ENCODE measurements at regions of chr4 and their contacts with region 1.

Region 1: GRCh38 chr4:89906777-89907521 is 12.3 kb downstream of the MMRN1 start:
- DNase-seq: no peak
- ATAC-seq: no peak

Region 2: GRCh38 chr4:89226665-89227574 is 680.0 kb before region 1 on chr4:
- intact Hi-C with region 1: loop called in 1 of 2 experiments (anchors 5 kb)
- DNase-seq: peak; percentile 86 to 90
- ATAC-seq: peak; percentile 96

Region 3: DNA sequence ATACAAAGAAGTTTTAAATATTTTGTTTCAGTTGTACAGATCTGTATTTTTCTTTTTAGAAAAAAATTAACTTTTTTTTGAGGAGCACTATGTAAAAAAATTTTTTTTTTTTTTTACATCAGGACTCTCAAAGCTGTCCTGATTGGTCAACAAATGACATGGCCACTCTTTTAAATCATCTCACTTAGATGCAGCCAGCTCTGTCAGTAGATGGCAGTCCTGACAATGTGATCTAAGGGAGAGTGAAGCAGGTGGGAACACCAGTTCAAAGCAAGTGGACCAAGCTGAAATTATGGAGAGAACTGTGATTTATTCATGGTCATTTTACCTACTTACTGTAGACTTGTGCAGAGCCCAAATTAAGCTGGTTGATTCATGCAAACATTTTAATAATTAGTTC is 424.7 kb before region 1 on chr4:
- intact Hi-C with region 1: loop called in 1 of 2 experiments (anchors 10 kb)
- DNase-seq: no peak
- ATAC-seq: peak; percentile 78

Region 4: GRCh38 chr4:89625599-89626298 is 281.2 kb before region 1 on chr4:
- intact Hi-C with region 1: no loop called
- DNase-seq: no peak
- ATAC-seq: no peak

Region 5: DNA sequence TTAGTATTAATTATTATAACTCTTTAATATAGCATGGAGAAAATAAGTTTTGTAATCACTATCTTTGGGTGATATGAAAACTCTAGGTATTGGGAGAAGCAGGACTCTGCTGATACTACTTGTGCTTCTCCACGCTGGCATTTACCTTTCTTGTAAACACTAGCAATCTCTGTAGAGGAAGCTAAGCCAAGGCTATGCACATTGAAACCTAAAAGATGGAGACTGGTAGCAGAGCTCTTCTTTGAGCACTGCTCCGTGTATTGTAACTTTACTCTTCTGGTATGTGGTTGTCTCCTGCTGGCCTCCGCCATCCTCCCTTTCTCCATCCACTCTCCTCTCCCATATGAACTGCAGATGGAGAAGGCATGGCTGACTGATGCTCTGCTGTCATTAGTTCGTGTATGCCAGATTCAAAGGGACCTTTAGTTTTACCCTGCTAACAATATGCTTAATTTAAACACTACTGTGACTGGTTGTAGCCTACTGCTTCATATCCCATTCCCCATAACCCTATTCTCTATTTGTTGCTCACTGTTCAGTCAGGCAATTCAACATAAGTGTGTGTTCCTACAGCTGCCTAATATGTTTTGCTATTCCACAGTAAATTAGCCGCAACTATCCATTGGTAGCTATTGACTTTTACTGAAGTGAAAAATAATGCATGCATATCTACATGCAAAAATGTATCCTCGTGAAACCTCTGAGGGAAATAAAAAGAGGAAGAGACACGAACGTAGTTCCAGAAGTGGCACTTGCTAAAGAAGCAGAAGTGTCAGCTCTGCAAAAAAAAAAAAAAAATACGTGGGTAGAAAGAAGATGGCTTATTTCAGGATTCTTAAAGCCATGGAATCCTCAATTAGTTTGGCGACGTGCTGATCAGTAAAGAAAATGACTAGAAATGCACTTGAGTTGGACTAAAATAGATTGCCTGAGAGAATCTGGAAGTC is 164.6 kb after region 1 on chr4:
- intact Hi-C with region 1: no loop called
- DNase-seq: no peak
- ATAC-seq: no peak

Region 6: DNA sequence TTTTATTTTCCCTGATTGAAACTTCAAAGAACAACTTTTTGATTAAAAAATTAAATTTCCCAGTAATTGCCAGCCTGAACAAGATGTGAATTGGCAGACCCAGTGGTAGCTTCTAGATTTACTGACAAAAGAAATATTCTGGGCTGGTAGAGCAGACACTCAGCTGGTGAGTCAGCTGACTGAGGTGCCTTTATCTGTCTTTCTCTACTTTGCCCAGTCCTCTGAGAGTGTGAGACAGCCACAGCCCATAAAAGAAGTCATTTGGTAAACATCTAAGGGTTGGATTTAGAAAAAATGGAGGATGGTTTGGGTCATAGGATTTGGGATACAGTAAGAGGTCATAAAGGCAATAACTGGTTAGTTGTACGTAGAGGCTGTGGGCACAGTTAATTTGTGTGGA is 274.7 kb after region 1 on chr4:
- intact Hi-C with region 1: no loop called
- DNase-seq: no peak
- ATAC-seq: peak; percentile 49

Measured in left colon (tissue), 2 donors.